Heart left ventricle (tissue), 16 donors: ENCODE measurements at regions of chr1 and their contacts with region 1.

Region 1: GRCh38 chr1:208245185-208245705 is 1.1 kb upstream of the PLXNA2 start:
- DNase-seq: peak; percentile 89 to 95 (median 91)
- ATAC-seq: peak; percentile 73 to 87 (median 78)
- H3K4me3 ChIP-seq: peak overlapping the region in 11 of 12 donors; percentile 66 to 98 (median 88)
- H3K27ac ChIP-seq: peak overlapping the region; percentile 74 to 98 (median 92)
- H3K4me1 ChIP-seq: peaks cover 0 to 53% (median 29%) of the 10 kb centered on the region in 12 donors
- H3K27me3 ChIP-seq: peaks cover 0 to 14% (median 0%) of the 10 kb centered on the region in 9 donors
- CTCF ChIP-seq: peak; percentile 76 to 93 (median 83)
- POLR2A ChIP-seq: no peak

Region 2: GRCh38 chr1:208024406-208024805 is 220.8 kb before region 1 on chr1:
- intact Hi-C with region 1: loop called (anchors 1 to 5 kb)
- DNase-seq: no peak
- ATAC-seq: no peak
- H3K4me3 ChIP-seq: no peak overlapping the region
- H3K27ac ChIP-seq: no peak overlapping the region
- H3K4me1 ChIP-seq: peaks cover 0 to 48% (median 5%) of the 10 kb centered on the region in 12 donors
- H3K27me3 ChIP-seq: no peaks in the 10 kb centered on the region
- CTCF ChIP-seq: no peak
- POLR2A ChIP-seq: no peak

Region 3: GRCh38 chr1:208036109-208036808 is 209.0 kb before region 1 on chr1:
- intact Hi-C with region 1: loop called in 3 of 10 experiments (anchors 5 kb)
- DNase-seq: no peak
- ATAC-seq: peak in 3 of 4 donors; percentile 43 to 44 (median 43)
- H3K4me3 ChIP-seq: no peak overlapping the region
- H3K27ac ChIP-seq: no peak overlapping the region
- H3K4me1 ChIP-seq: peaks cover 0 to 9% (median 1%) of the 10 kb centered on the region in 12 donors
- H3K27me3 ChIP-seq: no peaks in the 10 kb centered on the region
- CTCF ChIP-seq: peak in 9 of 12 donors; percentile 6 to 47 (median 28)
- POLR2A ChIP-seq: no peak

Region 4: GRCh38 chr1:208107425-208108212 is 137.6 kb before region 1 on chr1:
- intact Hi-C with region 1: loop called in 1 of 10 experiments (anchors 5 kb)
- DNase-seq: no peak
- ATAC-seq: peak in 1 of 4 donors; percentile 37
- H3K4me3 ChIP-seq: no peak overlapping the region
- H3K27ac ChIP-seq: no peak overlapping the region
- H3K4me1 ChIP-seq: peaks cover 0 to 25% (median 5%) of the 10 kb centered on the region in 12 donors
- H3K27me3 ChIP-seq: no peaks in the 10 kb centered on the region
- CTCF ChIP-seq: no peak
- POLR2A ChIP-seq: no peak

Region 5: DNA sequence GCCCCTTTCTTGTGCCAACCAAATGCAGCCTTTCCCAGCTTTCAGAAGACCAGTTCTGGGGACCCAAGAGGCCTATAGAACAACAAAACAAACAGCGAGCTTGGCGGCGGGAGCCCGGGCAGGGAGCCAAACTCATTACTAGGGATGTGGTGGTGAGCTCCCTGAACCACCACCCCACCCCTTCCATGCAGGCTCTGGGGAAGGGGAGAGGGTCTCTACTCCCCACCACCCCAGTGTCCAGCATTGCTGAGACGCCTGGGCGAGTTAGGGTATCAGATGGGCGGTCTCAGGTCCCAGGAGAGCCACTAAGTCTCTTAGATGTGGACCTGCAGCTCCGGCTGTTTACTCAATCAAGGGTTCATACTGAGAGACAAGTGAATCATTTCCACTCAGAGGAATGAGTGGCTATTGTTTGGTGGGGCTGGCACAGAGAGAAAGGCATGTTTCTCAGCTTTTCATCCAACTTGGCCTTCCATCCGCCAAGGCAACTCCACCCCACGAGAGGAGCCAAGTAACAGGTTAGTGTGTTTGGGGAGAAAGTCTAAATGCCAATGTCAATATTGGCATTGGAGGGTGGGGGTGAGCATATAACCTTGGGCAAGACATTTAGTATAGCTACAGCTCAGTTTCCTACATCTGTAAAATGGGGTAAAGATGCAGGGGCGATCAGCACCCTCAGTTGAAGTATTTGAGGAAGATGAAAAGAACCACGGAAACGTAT is 42.0 kb before region 1 on chr1:
- intact Hi-C with region 1: loop called in 2 of 10 experiments (anchors 5 kb)
- DNase-seq: peak; percentile 61 to 73 (median 64)
- ATAC-seq: peak in 3 of 4 donors; percentile 21 to 48 (median 39)
- H3K4me3 ChIP-seq: peak overlapping the region in 1 of 12 donors; percentile 11
- H3K27ac ChIP-seq: peak overlapping the region; percentile 64 to 86 (median 76)
- H3K4me1 ChIP-seq: peaks cover 17 to 86% (median 71%) of the 10 kb centered on the region in 12 donors
- H3K27me3 ChIP-seq: no peaks in the 10 kb centered on the region
- CTCF ChIP-seq: no peak
- POLR2A ChIP-seq: no peak

Region 6: GRCh38 chr1:208318150-208318734 is 73.0 kb after region 1 on chr1:
- intact Hi-C with region 1: no loop called
- DNase-seq: no peak
- ATAC-seq: no peak
- H3K4me3 ChIP-seq: no peak overlapping the region
- H3K27ac ChIP-seq: no peak overlapping the region
- H3K4me1 ChIP-seq: no peaks in the 10 kb centered on the region
- H3K27me3 ChIP-seq: peaks cover 0 to 32% (median 0%) of the 10 kb centered on the region in 9 donors
- CTCF ChIP-seq: no peak
- POLR2A ChIP-seq: no peak